ENCODE measurements at regions of chr4 and their contacts with region 1.

Region 1: DNA sequence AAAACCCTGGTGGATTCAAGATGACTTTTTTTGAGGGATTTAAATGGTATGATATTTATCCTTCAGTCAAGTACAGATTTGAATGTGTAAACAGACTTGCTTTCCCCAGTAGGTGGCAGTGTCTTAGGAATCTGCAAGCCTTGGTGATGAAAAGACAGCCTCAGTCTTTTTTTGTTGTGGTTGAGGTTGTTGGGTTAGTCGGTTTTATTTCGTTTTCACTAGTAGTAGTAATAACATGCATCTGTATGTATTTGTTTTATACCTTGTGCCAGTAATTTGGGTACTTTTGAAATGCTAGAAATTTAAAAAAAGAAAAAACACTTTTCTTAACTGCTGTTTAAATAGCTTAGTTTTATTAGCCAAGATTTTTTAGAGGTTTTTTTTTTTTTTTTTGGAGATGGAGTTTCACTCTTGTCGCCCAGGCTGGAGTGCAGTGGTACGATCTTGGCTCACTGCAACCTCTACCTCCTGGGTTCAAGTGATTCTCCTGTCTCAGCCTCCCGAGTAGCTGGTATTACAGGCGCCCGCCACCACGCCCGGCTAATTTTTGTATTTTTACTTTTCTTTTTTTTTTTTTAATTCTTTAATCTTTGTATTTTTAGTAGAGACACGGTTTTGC is 39.2 kb downstream of the COPS4 start:
- DNase-seq: no peak
- H3K4me3 ChIP-seq: no peak overlapping the region
- H3K27ac ChIP-seq: no peak overlapping the region
- H3K4me1 ChIP-seq: no peaks in the 10 kb centered on the region
- H3K27me3 ChIP-seq: no peaks in the 10 kb centered on the region
- CTCF ChIP-seq: peak in 2 of 3 experiments; percentile 62 to 71; a peak in 3 of 4 replicates
- EP300 ChIP-seq: no peak
- POLR2A ChIP-seq: no peak
- RAD21 ChIP-seq: peak; percentile 71 to 76

Region 2: GRCh38 chr4:83043801-83044407 is 30.3 kb before region 1 on chr4:
- CTCF ChIA-PET with region 1: interaction called, 10 read pairs
- POLR2A ChIA-PET with region 1: no interaction called
- DNase-seq: no peak
- H3K4me3 ChIP-seq: no peak overlapping the region
- H3K27ac ChIP-seq: no peak overlapping the region
- H3K4me1 ChIP-seq: no peaks in the 10 kb centered on the region
- H3K27me3 ChIP-seq: no peaks in the 10 kb centered on the region
- CTCF ChIP-seq: no peak
- EP300 ChIP-seq: no peak
- POLR2A ChIP-seq: no peak
- RAD21 ChIP-seq: no peak

Region 3: GRCh38 chr4:83062739-83063138 is 11.5 kb before region 1 on chr4:
- CTCF ChIA-PET with region 1: interaction called, 11 read pairs
- POLR2A ChIA-PET with region 1: no interaction called
- DNase-seq: no peak
- H3K4me3 ChIP-seq: no peak overlapping the region
- H3K27ac ChIP-seq: no peak overlapping the region
- H3K4me1 ChIP-seq: no peaks in the 10 kb centered on the region
- H3K27me3 ChIP-seq: no peaks in the 10 kb centered on the region
- CTCF ChIP-seq: no peak
- EP300 ChIP-seq: no peak
- POLR2A ChIP-seq: no peak
- RAD21 ChIP-seq: no peak

Region 4: DNA sequence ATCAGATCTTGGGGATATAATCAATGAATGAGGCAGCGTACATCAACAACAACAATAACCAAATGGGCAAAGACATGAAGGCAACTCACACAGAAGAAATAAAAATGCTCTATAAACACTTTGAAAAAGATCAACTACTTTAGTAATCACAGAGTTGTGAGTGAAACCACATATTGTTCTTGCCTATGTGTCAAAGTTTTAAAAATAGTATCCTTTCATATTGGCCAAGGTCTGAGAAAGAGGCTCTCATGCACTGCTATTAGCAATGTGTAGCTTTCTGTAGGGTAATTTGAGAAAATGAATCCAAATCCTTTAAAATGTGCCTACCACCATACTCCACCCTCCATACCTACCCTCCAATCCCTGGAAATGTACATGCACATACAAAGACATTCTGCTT is 185.4 kb after region 1 on chr4:
- CTCF ChIA-PET with region 1: interaction called, 19 read pairs
- POLR2A ChIA-PET with region 1: no interaction called
- DNase-seq: no peak
- H3K4me3 ChIP-seq: no peak overlapping the region
- H3K27ac ChIP-seq: no peak overlapping the region
- H3K4me1 ChIP-seq: no peaks in the 10 kb centered on the region
- H3K27me3 ChIP-seq: peaks cover 0 to 2% (median 0%) of the 10 kb centered on the region in 4 experiments; a peak in 1 of 7 replicates
- CTCF ChIP-seq: no peak
- EP300 ChIP-seq: no peak
- POLR2A ChIP-seq: no peak
- RAD21 ChIP-seq: no peak

Measured in H1 (cell line).